ENCODE measurements at regions of chr14 and their contacts with region 1.

Region 1: DNA sequence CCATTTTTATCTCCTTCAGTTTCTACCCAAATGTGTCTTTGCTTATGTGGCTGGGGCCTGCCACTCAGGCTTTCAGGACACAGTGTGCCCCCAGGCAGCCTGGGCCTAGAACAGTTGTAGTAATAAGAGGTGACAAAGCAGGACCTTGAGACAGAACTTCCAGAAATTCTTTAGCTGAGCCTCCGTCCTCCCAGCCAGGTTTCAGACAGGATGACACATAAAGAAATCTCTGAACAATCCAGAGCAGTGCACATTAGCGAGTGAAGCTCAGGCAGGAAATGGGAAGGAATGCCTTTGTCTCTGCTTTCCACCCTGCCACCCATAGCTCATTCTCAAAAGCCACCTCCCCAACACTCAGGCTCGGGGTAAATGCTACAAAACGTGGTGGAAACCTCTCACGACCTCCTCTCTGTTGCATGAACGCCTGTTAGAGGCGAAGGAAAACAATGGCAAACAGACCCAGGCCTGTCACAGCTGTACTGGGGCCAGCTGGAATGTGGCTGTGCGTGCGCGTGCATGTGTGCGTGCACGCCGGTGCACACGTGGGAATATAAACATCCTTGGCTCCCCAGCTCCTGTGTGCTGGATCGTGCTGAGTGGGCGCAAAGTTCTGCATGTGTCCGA is 286.7 kb downstream of the ZFP36L1 start:
- DNase-seq: no peak
- ATAC-seq: peak; percentile 10
- H3K4me3 Mint-ChIP-seq: peak overlapping the region; percentile 62
- H3K27ac Mint-ChIP-seq: peak overlapping the region; percentile 98
- H3K4me1 Mint-ChIP-seq: peaks cover 87% of the 10 kb centered on the region
- H3K27me3 Mint-ChIP-seq: no peaks in the 10 kb centered on the region
- CTCF ChIP-seq: no peak

Region 2: GRCh38 chr14:68137704-68138619 is 368.2 kb before region 1 on chr14:
- CTCF ChIA-PET with region 1: no interaction called
- POLR2A ChIA-PET with region 1: no interaction called
- intact Hi-C with region 1: no loop called
- DNase-seq: no peak
- ATAC-seq: no peak
- H3K4me3 Mint-ChIP-seq: no peak overlapping the region
- H3K27ac Mint-ChIP-seq: no peak overlapping the region
- H3K4me1 Mint-ChIP-seq: peaks cover 2% of the 10 kb centered on the region
- H3K27me3 Mint-ChIP-seq: no peaks in the 10 kb centered on the region
- CTCF ChIP-seq: no peak

Region 3: DNA sequence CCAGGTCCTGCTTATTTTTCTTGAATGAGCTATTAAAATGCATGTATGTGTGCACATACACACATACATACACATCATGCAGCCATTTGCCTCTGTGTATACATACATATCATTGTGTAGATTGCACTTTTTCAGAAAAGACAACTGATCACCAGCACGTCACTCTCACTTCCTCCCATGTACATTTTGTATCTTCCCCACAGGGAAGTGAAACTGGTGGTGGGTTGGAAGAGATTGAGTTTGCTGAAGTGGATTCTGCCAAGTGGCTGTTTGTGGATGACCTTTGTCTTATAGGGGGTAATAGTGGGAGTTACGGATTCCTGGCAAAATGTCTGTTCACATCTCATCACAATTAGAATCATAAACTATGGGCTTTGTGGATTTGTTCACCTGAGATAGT is 237.9 kb before region 1 on chr14:
- CTCF ChIA-PET with region 1: interaction called, 4 read pairs
- POLR2A ChIA-PET with region 1: interaction called, 56 read pairs
- intact Hi-C with region 1: loop called (anchors 5 kb)
- DNase-seq: no peak
- ATAC-seq: peak; percentile 67
- H3K4me3 Mint-ChIP-seq: peak overlapping the region; percentile 63
- H3K27ac Mint-ChIP-seq: peak overlapping the region; percentile 93
- H3K4me1 Mint-ChIP-seq: peaks cover 93% of the 10 kb centered on the region
- H3K27me3 Mint-ChIP-seq: no peaks in the 10 kb centered on the region
- CTCF ChIP-seq: no peak

Region 4: DNA sequence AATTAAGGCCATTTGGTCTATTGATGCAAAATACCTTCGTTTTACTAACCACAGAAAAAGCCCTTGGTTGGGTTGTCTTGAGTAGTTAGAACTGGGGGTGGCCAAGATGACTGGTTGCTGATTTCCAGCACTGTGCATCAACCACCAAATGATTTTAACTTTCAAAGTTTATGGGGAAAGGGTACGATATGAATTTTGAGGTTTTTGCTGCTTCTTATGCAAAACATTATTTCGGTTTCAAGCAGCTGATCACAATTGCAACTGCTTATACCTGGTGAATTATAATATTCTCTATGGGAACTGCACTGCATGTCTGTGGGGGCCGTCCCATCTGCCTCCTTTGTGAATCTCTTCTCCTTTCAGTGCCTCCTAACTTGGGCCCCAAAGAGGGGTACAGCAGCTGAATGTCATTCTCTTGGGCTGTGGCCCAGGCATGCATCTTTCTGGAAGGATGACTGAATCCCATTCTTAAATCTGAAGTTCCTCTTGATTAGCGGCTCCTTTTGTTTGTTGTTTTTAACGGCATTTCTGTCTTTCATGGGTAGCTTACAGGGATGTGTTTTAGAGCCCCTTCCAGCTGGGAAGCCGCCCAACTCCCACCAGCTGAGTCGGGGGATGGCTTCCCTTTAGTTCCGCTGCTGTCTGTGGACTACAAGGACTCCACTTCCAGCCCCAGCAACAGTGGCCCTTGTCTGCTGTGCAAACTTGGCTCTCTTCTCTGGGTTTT is 193.1 kb before region 1 on chr14:
- CTCF ChIA-PET with region 1: no interaction called
- POLR2A ChIA-PET with region 1: interaction called, 16 read pairs
- intact Hi-C with region 1: no loop called
- DNase-seq: no peak
- ATAC-seq: peak; percentile 84
- H3K4me3 Mint-ChIP-seq: peak overlapping the region; percentile 62
- H3K27ac Mint-ChIP-seq: peak overlapping the region; percentile 94
- H3K4me1 Mint-ChIP-seq: peaks cover 91% of the 10 kb centered on the region
- H3K27me3 Mint-ChIP-seq: no peaks in the 10 kb centered on the region
- CTCF ChIP-seq: no peak

Region 5: GRCh38 chr14:68384335-68384734 is 121.8 kb before region 1 on chr14:
- CTCF ChIA-PET with region 1: no interaction called
- POLR2A ChIA-PET with region 1: no interaction called
- intact Hi-C with region 1: no loop called
- DNase-seq: no peak
- ATAC-seq: no peak
- H3K4me3 Mint-ChIP-seq: no peak overlapping the region
- H3K27ac Mint-ChIP-seq: no peak overlapping the region
- H3K4me1 Mint-ChIP-seq: peaks cover 35% of the 10 kb centered on the region
- H3K27me3 Mint-ChIP-seq: no peaks in the 10 kb centered on the region
- CTCF ChIP-seq: no peak

Region 6: DNA sequence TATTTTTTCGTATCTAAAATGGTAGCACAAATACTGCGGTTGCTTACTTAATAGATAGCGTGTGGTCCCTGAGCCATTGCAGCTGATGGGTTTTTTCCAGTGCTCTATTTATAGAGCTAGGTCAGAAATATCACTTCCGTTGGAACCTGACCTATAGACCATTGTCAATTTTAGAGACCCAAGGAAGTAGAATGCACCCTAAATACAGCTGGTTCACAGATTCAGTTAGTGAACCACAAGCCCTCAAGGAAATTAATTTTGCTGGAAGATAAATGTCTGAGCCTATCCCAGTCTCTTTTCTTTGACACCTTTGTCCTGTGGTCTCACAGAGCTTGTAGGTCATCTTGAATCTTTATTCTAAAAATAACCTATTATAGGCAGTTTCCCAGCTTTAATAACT is 104.3 kb before region 1 on chr14:
- CTCF ChIA-PET with region 1: interaction called, 4 read pairs
- POLR2A ChIA-PET with region 1: interaction called, 96 read pairs
- intact Hi-C with region 1: no loop called
- DNase-seq: no peak
- ATAC-seq: peak; percentile 59
- H3K4me3 Mint-ChIP-seq: peak overlapping the region; percentile 72
- H3K27ac Mint-ChIP-seq: peak overlapping the region; percentile 92
- H3K4me1 Mint-ChIP-seq: peaks cover 92% of the 10 kb centered on the region
- H3K27me3 Mint-ChIP-seq: no peaks in the 10 kb centered on the region
- CTCF ChIP-seq: no peak

Region 7: GRCh38 chr14:68476212-68476907 is 29.8 kb before region 1 on chr14:
- CTCF ChIA-PET with region 1: interaction called, 8 read pairs
- POLR2A ChIA-PET with region 1: interaction called, 53 read pairs
- intact Hi-C with region 1: loop called (anchors 1 kb)
- DNase-seq: peak; percentile 40
- ATAC-seq: peak; percentile 83
- H3K4me3 Mint-ChIP-seq: peak overlapping the region; percentile 62
- H3K27ac Mint-ChIP-seq: peak overlapping the region; percentile 99
- H3K4me1 Mint-ChIP-seq: peaks cover 89% of the 10 kb centered on the region
- H3K27me3 Mint-ChIP-seq: no peaks in the 10 kb centered on the region
- CTCF ChIP-seq: no peak

Region 8: DNA sequence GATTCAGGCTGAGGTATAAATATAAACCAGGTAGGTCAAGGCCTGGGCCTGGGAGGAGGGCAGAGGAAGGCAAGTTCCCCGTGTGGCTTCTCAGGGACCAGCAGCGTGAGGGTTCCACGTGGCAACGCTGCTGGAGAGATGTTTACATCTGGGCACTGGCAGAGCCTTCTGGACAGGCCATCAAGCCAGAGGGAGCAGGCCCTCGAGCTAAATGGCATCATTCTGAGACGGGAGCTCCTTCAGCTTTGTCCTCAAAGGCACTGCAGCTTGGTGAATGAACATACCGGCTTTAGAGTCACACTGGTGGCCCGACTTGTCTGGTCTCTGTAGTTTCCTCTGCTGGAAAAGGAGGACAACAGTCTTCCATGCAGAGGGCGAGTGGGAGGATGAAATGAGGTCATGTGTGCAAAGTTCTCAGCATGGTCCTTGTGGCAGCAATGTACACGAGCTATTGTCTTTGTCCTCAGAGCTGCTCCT is 55.4 kb after region 1 on chr14:
- CTCF ChIA-PET with region 1: no interaction called
- POLR2A ChIA-PET with region 1: no interaction called
- intact Hi-C with region 1: no loop called
- DNase-seq: no peak
- ATAC-seq: no peak
- H3K4me3 Mint-ChIP-seq: no peak overlapping the region
- H3K27ac Mint-ChIP-seq: no peak overlapping the region
- H3K4me1 Mint-ChIP-seq: peaks cover 35% of the 10 kb centered on the region
- H3K27me3 Mint-ChIP-seq: no peaks in the 10 kb centered on the region
- CTCF ChIP-seq: no peak

Region 9: GRCh38 chr14:68627880-68628607 is 121.9 kb after region 1 on chr14:
- CTCF ChIA-PET with region 1: no interaction called
- POLR2A ChIA-PET with region 1: interaction called, 13 read pairs
- intact Hi-C with region 1: no loop called
- DNase-seq: peak; percentile 52
- ATAC-seq: peak; percentile 76
- H3K4me3 Mint-ChIP-seq: peak overlapping the region; percentile 80
- H3K27ac Mint-ChIP-seq: peak overlapping the region; percentile 80
- H3K4me1 Mint-ChIP-seq: peaks cover 28% of the 10 kb centered on the region
- H3K27me3 Mint-ChIP-seq: no peaks in the 10 kb centered on the region
- CTCF ChIP-seq: no peak

Region 10: GRCh38 chr14:68788996-68789820 is 283.1 kb after region 1 on chr14:
- CTCF ChIA-PET with region 1: interaction called, 9 read pairs
- POLR2A ChIA-PET with region 1: interaction called, 585 read pairs
- intact Hi-C with region 1: loop called (anchors 1 kb)
- DNase-seq: peak; percentile 62
- ATAC-seq: no peak
- H3K4me3 Mint-ChIP-seq: peak overlapping the region; percentile 100
- H3K27ac Mint-ChIP-seq: peak overlapping the region; percentile 99
- H3K4me1 Mint-ChIP-seq: peaks cover 54% of the 10 kb centered on the region
- H3K27me3 Mint-ChIP-seq: no peaks in the 10 kb centered on the region
- CTCF ChIP-seq: no peak